GM12878 (cell line): ENCODE measurements at regions of chr11 and their contacts with region 1.

Region 1: DNA sequence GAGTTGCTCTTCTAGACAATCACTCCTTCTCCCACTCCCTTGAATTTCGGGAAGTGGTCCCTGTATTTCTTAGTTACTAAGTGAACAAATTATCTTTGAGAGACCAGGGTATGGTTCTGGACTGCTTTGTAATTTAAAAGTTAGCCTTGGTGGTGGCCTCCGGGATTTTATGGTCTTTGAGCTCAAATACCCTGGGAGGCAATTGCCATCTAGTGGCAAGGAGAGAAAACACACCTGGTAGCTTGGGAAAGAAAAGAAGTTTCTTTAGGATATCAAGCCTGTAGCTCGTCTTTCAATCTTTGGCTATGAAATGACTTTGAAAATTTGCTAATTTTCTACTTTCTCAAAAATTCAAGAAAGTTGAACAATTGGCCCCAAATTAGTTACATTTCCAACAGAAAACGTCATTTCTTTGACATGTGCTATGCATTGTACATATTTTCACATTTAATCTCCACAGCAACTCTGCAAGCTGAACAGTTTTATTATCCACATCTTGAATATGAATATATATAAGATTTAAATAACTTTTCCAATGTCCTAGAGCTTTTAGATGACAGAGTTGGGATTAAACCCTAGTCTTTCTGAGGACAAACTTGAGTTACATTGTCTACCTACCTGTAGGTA is 39.1 kb downstream of the MMP27 start:
- DNase-seq: no peak
- ATAC-seq: peak; percentile 76
- H3K4me3 ChIP-seq: no peak overlapping the region
- H3K27ac ChIP-seq: no peak overlapping the region
- H3K4me1 ChIP-seq: no peaks in the 10 kb centered on the region
- H3K27me3 ChIP-seq: peaks cover 0 to 3% of the 10 kb centered on the region in 2 experiments; a peak in 1 of 4 replicates
- CTCF ChIP-seq: peak; percentile 81 to 87 (median 82)
- EP300 ChIP-seq: no peak
- POLR2A ChIP-seq: no peak
- RAD21 ChIP-seq: peak; percentile 97

Region 2: GRCh38 chr11:102268329-102269193 is 397.9 kb before region 1 on chr11:
- CTCF ChIA-PET with region 1: interaction called, 15 read pairs
- POLR2A ChIA-PET with region 1: no interaction called
- RAD21 ChIA-PET with region 1: interaction called, 5 read pairs
- SMC1A ChIA-PET with region 1: interaction called, 8 read pairs
- in situ Hi-C with region 1: no loop called
- intact Hi-C with region 1: no loop called
- DNase-seq: peak; percentile 17
- ATAC-seq: peak; percentile 98
- H3K4me3 ChIP-seq: peak overlapping the region; percentile 66
- H3K27ac ChIP-seq: no peak overlapping the region
- H3K4me1 ChIP-seq: no peaks in the 10 kb centered on the region; the same call in 1 of the 2 replicates
- H3K27me3 ChIP-seq: peaks cover 0 to 8% of the 10 kb centered on the region in 2 experiments; a peak in 2 of 4 replicates
- CTCF ChIP-seq: peak in 2 of 3 experiments; percentile 43 to 55; a peak in 4 of 6 replicates
- EP300 ChIP-seq: no peak
- POLR2A ChIP-seq: no peak
- RAD21 ChIP-seq: peak; percentile 30; the same call in 1 of the 2 replicates

Region 3: DNA sequence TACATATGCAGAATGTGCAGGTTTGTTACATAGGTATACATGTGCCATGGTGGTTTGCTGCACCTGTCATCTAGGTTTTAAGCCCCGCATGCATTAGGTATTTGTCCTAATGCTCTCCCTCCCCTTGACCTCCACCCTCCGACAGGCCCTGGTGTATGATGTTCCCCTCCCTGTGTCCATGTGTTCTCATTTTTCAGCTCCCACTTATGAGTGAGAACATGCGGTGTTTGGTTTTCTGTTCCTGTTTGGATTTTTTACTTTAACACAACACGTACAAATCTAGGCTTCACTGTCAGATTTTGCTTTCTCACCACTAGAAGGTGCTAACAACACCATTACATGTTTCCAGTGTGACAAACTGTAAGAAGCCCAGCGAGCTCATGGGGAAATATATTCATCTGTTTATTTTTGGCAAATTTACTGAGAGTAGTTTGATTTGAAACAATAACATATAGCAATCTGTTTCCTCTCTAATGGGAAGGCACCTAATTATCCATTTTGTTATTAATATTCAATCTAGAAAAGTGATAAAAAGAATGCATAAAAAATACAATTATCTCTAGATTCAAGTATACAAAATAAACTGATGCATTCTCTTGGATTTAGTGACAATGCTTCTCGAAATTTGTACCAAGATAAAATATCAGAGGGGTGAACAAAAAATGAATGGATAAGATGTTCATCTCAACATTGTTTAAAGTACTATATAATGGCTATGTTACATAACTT is 372.4 kb before region 1 on chr11:
- CTCF ChIA-PET with region 1: interaction called, 91 read pairs
- POLR2A ChIA-PET with region 1: interaction called, 4 read pairs
- RAD21 ChIA-PET with region 1: interaction called, 49 read pairs
- SMC1A ChIA-PET with region 1: interaction called, 48 read pairs
- in situ Hi-C with region 1: no loop called
- intact Hi-C with region 1: no loop called
- DNase-seq: no peak
- ATAC-seq: peak; percentile 96
- H3K4me3 ChIP-seq: no peak overlapping the region
- H3K27ac ChIP-seq: 0 out of 2 replicates have a peak overlapping the region, but pooled peaks have one; percentile 8
- H3K4me1 ChIP-seq: peaks cover 12% of the 10 kb centered on the region
- H3K27me3 ChIP-seq: no peaks in the 10 kb centered on the region
- CTCF ChIP-seq: peak; percentile 77 to 81 (median 79)
- EP300 ChIP-seq: no peak
- POLR2A ChIP-seq: no peak
- RAD21 ChIP-seq: peak; percentile 84

Region 4: DNA sequence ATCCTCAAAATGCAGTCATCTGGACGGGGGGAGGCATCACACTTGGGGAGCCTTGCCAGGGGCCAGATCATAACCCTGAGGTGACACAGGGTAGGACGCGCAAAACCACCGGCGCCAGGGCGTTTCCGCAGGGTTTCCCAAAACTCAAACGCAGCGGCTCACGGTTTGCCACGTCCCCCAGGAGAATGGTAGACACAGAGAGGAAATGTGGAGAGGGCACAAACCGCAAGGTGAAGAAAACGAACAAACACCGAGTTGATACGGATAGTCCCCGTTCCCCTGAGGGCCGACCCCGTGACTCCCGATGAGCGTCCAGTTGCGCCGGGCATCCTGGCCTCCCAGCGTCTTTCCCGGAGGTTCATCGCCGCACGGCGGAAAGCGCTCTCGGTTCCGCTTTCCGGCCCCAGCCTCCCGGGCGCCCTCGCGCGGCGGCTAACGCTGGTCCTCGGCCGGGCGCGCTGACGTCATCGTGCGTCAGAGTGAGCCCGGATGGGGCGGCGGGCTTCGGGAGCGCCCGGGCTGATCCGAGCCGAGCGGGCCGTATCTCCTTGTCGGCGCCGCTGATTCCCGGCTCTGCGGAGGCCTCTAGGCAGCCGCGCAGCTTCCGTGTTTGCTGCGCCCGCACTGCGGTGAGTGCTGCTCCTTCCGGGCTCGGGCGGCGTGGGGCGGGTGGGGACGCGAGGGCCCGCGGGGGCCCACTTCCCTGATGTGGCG is 319.5 kb before region 1 on chr11 and contains the start of gene BIRC2:
- CTCF ChIA-PET with region 1: interaction called, 131 read pairs
- POLR2A ChIA-PET with region 1: interaction called, 3 read pairs
- RAD21 ChIA-PET with region 1: interaction called, 80 read pairs
- SMC1A ChIA-PET with region 1: interaction called, 86 read pairs
- in situ Hi-C with region 1: no loop called
- intact Hi-C with region 1: no loop called
- DNase-seq: peak; percentile 67
- ATAC-seq: peak; percentile 86
- H3K4me3 ChIP-seq: peak within 1 kb of the TSS; percentile 77
- H3K27ac ChIP-seq: peak within 1 kb of the TSS; percentile 96
- H3K4me1 ChIP-seq: no peaks in the 10 kb centered on the region
- H3K27me3 ChIP-seq: no peaks in the 10 kb centered on the region
- CTCF ChIP-seq: peak; percentile 71 to 90 (median 80)
- EP300 ChIP-seq: peak; percentile 65 to 78; a peak in 3 of 4 replicates
- POLR2A ChIP-seq: peak; percentile 92
- RAD21 ChIP-seq: no peak; the same call in 1 of the 2 replicates
- polyA plus RNA-seq, gene BIRC2: 13.8 to 17.8 TPM

Region 5: DNA sequence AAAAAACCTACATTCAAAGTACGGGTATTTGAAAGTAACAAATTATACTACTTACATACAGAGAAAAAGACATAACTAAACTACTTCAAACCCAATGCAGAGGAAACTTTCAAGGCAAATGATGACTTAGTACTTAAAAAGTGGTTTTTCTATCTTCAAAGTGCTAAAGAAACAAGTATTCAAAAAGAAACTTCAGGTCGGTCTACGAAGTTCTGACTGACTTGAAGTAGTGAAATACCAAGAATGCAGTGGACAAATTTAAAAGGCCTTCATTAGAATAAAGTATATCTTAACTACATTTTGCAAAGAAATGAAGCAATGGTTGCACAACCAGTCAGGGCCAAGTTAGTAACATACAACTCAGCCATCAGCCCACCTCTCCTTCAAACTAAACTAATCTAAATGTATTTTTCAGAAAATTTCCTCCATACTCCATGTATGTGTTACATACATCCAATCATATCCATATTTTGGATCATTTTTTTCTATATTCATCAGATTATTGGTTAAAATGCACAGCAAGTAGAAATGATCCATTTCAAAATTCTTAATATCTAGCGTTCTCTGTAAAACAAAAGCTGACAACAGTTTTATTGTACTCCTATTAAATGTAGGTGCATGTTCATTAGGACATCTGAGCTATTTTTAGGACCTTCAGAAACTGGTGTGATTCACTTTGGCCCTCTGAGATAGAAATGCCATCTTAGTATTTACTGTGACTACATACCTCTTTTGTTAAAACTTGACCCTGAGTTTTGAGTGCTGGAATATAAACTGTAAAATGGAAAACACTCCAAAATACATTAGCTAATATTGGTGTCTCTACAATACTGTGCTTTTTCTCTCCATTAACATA is 269.5 kb before region 1 on chr11:
- CTCF ChIA-PET with region 1: interaction called, 46 read pairs
- POLR2A ChIA-PET with region 1: no interaction called
- RAD21 ChIA-PET with region 1: interaction called, 5 read pairs
- SMC1A ChIA-PET with region 1: interaction called, 25 read pairs
- in situ Hi-C with region 1: no loop called
- intact Hi-C with region 1: no loop called
- DNase-seq: no peak
- ATAC-seq: peak; percentile 16; the same call in 2 of the 3 replicates
- H3K4me3 ChIP-seq: no peak overlapping the region
- H3K27ac ChIP-seq: no peak overlapping the region
- H3K4me1 ChIP-seq: peaks cover 5% of the 10 kb centered on the region
- H3K27me3 ChIP-seq: no peaks in the 10 kb centered on the region
- CTCF ChIP-seq: no peak
- EP300 ChIP-seq: no peak
- POLR2A ChIP-seq: no peak
- RAD21 ChIP-seq: no peak

Region 6: DNA sequence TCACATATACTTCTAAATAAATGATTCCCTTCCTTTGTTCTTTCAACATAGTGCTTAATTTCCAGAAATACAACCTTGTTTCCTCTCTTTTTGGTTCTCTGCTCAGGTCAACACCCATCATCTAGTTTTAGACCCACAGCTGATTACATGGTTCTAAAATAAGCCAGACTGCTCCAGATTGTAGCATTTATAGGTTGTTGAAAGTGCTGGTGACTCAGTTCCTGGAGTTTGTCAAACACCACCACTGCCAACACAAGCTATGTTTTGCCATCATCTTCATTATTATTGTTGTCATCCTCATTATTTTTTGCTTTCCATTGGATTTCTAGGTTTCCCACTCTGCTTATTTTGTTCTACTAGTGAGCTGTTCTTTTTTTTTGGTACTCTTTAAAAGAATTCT is 19.0 kb before region 1 on chr11:
- CTCF ChIA-PET with region 1: interaction called, 10 read pairs
- POLR2A ChIA-PET with region 1: interaction called, 3 read pairs
- RAD21 ChIA-PET with region 1: no interaction called
- SMC1A ChIA-PET with region 1: interaction called, 5 read pairs
- in situ Hi-C with region 1: no loop called
- intact Hi-C with region 1: no loop called
- DNase-seq: no peak
- ATAC-seq: no peak
- H3K4me3 ChIP-seq: no peak overlapping the region
- H3K27ac ChIP-seq: no peak overlapping the region
- H3K4me1 ChIP-seq: no peaks in the 10 kb centered on the region
- H3K27me3 ChIP-seq: no peaks in the 10 kb centered on the region
- CTCF ChIP-seq: no peak
- EP300 ChIP-seq: no peak
- POLR2A ChIP-seq: no peak
- RAD21 ChIP-seq: no peak

Region 7: DNA sequence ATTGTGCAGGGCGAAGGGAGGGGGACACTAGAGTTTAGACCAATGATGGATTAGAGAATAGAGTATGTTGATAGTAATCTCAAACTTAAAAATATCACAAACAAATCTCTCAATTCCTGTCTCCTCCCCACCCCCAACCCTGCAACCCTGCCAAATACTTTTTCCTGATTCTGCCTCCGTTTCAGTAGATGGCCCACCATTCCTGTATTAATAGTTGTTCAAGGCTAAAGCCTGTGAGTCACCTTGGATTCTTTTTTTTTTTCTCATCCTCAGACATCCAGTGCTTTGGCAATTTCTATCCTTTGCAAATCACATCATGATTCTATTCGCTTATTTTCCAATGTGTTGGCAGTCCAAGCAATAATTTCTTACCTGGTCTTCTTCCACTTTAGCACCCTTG is 650.7 kb after region 1 on chr11:
- CTCF ChIA-PET with region 1: no interaction called
- POLR2A ChIA-PET with region 1: no interaction called
- RAD21 ChIA-PET with region 1: no interaction called
- SMC1A ChIA-PET with region 1: no interaction called
- in situ Hi-C with region 1: no loop called
- intact Hi-C with region 1: no loop called
- DNase-seq: no peak
- ATAC-seq: no peak
- H3K4me3 ChIP-seq: no peak overlapping the region
- H3K27ac ChIP-seq: no peak overlapping the region
- H3K4me1 ChIP-seq: no peaks in the 10 kb centered on the region
- H3K27me3 ChIP-seq: no peaks in the 10 kb centered on the region
- CTCF ChIP-seq: no peak
- EP300 ChIP-seq: no peak
- POLR2A ChIP-seq: no peak
- RAD21 ChIP-seq: no peak